ENCODE measurements at regions of chr2 and their contacts with region 1.

Region 1: GRCh38 chr2:152635635-152636298 is 81.5 kb downstream of the PRPF40A start:
- DNase-seq: peak; percentile 34 to 65 (median 50)
- H3K4me3 ChIP-seq: no peak overlapping the region
- H3K27ac ChIP-seq: no peak overlapping the region
- H3K4me1 ChIP-seq: no peaks in the 10 kb centered on the region
- H3K27me3 ChIP-seq: no peaks in the 10 kb centered on the region
- CTCF ChIP-seq: peak; percentile 63 to 72 (median 67)
- EP300 ChIP-seq: no peak
- POLR2A ChIP-seq: no peak

Region 2: DNA sequence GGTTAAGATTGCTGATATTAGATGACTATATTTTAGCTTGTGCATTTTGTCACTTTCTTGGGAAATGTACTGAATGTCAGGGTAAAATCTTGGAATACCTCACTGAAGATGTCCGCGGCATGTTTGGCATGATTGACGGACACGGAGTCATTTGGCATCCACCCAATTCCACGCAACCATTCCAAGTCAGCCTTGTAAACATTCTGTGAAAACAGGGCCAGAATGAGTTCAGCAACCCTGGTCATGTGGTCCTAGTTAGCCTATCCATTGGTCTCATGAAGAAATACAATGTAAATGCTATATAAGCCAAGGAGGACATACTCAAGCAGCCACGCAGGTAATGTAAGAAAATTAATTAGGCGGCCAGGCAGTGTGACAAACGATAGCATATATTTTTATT is 1066.6 kb before region 1 on chr2:
- intact Hi-C with region 1: no loop called
- DNase-seq: no peak
- H3K4me3 ChIP-seq: no peak overlapping the region
- H3K27ac ChIP-seq: no peak overlapping the region
- H3K4me1 ChIP-seq: no peaks in the 10 kb centered on the region
- H3K27me3 ChIP-seq: no peaks in the 10 kb centered on the region
- CTCF ChIP-seq: no peak
- EP300 ChIP-seq: no peak
- POLR2A ChIP-seq: no peak

Region 3: DNA sequence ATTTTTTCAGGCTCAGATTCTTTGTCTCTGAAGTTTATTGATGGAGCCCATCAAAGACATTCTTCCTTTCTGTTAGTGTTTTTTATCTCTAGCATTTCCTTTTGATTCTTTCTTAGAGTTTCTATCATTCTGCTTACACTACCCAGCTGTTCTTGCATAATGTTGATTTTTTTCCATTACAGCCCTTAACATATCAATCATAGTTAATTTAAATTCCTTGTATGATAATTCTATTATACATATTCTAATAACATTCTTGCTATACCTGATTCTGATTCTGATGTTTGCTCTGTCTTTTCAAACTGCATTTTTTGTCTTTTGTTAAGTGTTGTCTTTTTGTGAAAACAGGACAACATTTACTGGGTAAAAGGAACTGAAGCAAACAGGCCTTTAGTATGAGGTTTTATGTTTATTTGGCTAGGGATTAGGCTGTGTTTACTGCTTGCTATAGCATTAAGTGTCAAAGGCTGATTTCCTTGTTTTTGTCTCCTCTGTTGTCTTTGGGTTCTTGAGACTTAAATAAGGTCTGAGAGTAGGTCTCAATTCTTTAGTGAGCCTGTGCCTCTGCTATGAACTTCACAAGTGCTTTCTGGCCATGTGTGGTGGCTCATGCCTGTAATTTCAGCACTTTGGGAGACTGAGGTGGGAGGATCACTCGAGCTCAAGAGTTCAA is 452.2 kb before region 1 on chr2:
- intact Hi-C with region 1: loop called in 3 of 4 experiments (anchors 5 kb)
- DNase-seq: no peak
- H3K4me3 ChIP-seq: no peak overlapping the region
- H3K27ac ChIP-seq: no peak overlapping the region
- H3K4me1 ChIP-seq: no peaks in the 10 kb centered on the region
- H3K27me3 ChIP-seq: no peaks in the 10 kb centered on the region
- CTCF ChIP-seq: no peak
- EP300 ChIP-seq: no peak
- POLR2A ChIP-seq: no peak

Measured in ovary (tissue), 10 donors.